Activated CD8-positive, alpha-beta T cell treated with anti-CD3 and anti-CD28 coated beads for 36 hours (primary cell): ENCODE measurements at regions of chr3 and their contacts with region 1.

Region 1: GRCh38 chr3:128226795-128227395 is 73.6 kb downstream of the EEFSEC start:
- DNase-seq: peak; percentile 43
- ATAC-seq: peak; percentile 64
- H3K4me3 Mint-ChIP-seq: no peak overlapping the region
- H3K27ac Mint-ChIP-seq: no peak overlapping the region
- H3K4me1 Mint-ChIP-seq: peaks cover 10% of the 10 kb centered on the region
- H3K27me3 Mint-ChIP-seq: no peaks in the 10 kb centered on the region
- CTCF ChIP-seq: peak; percentile 77

Region 2: DNA sequence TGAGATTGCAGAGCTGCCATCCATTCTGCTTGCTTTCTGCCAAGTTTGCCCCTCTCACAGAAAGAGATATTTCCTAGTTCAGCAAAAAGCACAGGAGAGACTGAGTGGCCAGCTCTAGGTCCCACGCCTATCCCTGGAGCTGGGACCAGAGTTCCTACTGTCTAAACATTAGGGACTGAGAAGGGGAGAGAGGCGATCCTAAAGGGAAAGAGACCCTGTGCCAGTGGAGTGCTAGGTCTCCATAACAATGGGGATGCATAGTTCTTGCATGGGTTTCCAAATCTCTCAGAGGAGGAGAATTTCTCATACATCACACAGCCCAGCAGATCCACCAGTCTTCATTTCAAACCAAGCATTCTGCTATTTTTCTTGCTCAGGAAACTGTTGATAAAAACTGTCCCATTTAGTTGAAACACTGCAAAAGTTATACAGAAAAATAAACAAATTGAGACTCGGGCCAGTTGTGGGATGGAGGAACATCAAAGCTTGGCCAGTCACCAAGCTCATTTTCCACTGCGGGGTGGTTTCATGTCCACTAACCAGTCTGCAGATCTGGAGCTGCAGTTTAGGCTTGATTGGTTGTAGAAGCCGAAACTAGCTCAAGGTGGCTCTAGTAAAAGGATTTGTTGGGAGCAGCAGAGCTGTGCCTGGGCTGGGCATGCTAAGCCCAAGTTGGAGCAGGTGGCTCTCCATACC is 10.9 kb before region 1 on chr3:
- CTCF ChIA-PET with region 1: interaction called, 16 read pairs
- POLR2A ChIA-PET with region 1: no interaction called
- intact Hi-C with region 1: no loop called
- DNase-seq: no peak
- ATAC-seq: no peak
- H3K4me3 Mint-ChIP-seq: no peak overlapping the region
- H3K27ac Mint-ChIP-seq: no peak overlapping the region
- H3K4me1 Mint-ChIP-seq: peaks cover 7% of the 10 kb centered on the region
- H3K27me3 Mint-ChIP-seq: no peaks in the 10 kb centered on the region
- CTCF ChIP-seq: no peak